ENCODE measurements at regions of chr11 and their contacts with region 1.

Region 1: DNA sequence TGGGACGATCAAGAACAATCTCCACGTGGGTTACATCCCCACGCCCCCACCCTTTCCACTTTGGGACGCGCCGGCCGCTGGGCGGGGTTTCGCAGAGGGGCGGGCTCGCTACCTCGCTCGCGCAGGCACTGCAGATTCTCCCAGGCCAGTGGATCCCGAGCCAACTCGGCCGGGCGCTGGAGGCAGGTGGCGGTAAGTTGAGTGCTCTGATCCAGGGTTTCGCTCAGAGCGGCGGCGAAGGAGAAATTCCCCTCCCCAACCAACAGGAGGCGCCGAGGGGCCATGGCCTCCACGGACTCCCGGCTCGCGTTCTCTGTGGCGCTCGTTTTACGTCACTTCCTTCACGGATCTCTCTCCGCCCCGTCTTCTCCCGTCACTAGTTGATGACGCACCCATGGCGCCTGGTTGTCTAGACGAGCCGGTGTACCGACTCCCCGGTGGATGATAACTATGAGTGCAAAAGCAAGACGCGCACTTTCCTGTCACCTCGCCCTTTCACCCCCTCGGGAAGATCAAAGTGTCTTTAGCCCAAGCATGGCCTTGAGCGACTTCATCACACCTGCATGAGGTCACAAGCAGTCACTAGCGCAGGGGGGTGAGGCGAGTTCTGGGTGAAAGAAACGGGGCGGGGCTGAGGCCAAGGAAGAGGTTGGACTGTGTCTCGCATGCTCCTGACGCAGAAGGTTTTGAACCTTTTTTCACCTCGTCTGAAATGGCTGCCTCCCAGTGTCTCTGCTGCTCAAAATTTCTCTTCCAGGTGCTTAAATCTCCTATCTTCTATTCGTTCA is at the starts of genes CFAP68 and FDXACB1:
- DNase-seq: peak; percentile 95
- ATAC-seq: peak; percentile 94
- total RNA-seq, gene CFAP68: 26.1 TPM
- total RNA-seq, gene FDXACB1: 1.3 TPM

Region 2: DNA sequence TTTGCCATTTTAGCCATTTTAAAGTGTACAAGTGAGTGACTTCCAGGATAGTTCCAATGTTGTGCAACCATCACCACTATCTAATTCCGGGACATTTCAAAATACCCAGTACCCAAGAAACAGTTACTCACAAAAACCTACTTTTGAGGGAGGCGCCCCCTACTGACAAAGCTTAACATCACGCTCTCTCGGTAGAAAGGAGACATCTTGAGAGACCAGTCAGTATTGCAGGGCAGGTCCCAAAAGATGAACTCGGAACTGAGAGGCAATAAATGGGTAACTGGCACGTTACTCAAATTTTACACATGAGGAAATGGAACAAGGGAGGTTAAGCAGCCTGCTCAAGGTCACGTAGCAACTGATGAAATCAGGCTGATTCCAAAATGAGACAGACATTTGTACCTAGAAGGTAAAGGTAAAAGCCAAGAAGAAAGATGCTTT is 450.0 kb before region 1 on chr11:
- intact Hi-C with region 1: no loop called
- DNase-seq: no peak
- ATAC-seq: peak; percentile 51

Region 3: GRCh38 chr11:111829185-111829968 is 49.7 kb before region 1 on chr11:
- intact Hi-C with region 1: no loop called
- DNase-seq: no peak
- ATAC-seq: no peak

Region 4: GRCh38 chr11:111926505-111927391 is 47.7 kb after region 1 on chr11:
- intact Hi-C with region 1: loop called (anchors 10 kb)
- DNase-seq: peak; percentile 98
- ATAC-seq: peak; percentile 94

Region 5: DNA sequence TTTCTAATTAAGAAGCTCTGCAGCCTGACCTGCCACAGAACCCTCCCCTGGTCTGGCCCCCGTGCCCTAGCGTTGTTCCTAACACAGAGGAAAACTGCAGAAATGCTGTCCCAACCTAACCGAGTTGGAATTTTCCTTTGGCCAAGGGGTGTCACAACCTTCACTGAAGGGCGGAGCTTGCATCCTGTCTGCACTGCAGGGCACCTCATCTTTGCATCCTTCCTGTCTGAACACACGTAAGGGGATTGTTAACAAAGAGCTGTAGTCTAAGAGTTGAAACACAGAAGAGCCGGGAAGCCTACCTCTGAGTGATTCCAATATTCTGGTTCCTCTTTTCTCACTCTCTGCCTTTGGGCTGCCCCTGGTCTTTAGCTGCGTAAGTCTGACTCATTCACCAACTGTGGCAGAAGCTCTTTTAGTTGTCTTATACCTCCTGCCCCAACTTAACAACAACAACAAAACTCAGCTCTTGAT is 59.7 kb after region 1 on chr11:
- intact Hi-C with region 1: no loop called
- DNase-seq: no peak
- ATAC-seq: peak; percentile 3